ENCODE measurements at regions of chr22 and their contacts with region 1.

Region 1: DNA sequence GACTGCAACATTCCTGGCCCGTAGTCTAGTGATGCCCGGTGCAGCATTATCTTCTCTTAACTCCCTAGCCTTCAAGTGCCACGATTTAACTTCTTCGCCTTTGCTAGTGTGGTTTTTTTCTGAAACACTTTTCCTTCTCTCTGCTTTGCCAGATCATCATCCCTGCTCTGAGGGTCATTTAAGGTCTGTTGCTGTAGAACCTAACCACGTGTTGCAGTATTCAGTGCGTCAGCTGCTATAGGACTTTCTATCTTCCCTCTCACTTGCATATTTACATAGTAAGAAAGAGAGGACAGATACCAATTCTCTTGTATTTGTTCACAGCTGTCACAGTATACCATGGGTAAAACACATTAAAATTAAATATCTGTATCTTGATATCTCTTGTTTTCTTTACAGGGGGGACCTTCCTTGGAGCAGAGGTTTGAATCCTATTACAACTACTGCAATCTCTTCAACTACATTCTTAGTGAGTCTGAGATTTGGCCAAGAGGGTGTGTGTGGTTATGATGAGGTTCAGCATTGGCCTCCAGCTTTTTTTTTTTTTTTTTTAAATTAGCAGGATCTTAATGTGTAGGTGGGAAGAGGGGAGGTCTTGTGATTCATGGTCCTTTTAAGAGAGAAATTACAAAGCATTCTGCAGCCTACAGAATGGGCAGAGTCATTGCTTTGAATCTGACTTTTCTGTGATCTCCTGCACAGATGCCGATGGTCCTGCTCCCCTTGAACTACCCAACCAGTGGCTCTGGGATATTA is 13.5 kb downstream of the EIF3L start:
- DNase-seq: no peak
- H3K4me3 ChIP-seq: no peak overlapping the region
- H3K27ac ChIP-seq: no peak overlapping the region
- H3K4me1 ChIP-seq: no peaks in the 10 kb centered on the region
- H3K27me3 ChIP-seq: no peaks in the 10 kb centered on the region

Region 2: DNA sequence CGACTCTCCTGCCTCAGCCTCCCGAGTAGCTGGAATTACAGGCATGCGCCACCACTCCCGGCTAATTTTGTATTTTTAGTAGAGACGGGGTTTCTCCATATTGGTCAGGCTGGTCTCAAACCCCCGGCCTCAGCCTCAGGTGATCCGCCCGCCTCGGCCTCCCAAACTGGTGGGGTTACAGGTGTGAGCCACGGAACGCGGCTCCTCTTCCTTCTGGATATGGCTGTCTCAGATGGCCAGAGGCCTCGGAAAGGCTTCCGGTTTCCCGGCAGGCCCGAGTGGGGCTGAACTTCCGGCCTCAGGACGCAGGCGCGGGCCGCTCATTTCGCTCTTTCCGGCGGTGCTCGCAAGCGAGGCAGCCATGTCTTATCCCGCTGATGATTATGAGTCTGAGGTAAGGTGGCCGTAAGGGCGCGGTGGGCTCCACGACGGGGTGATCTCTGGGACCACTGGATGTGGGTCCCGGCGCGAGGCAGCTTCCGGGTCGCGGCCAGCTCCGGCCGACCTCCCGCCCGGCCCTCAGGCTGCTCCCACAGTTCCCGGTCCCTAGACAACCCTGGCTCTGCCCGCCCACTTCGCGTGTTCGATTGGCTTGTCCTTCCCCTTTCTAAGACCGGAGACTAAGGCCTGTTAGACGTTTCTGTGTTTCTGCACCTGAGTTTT is 13.5 kb before region 1 on chr22 and contains the start of gene EIF3L:
- CTCF ChIA-PET with region 1: interaction called, 26 read pairs
- POLR2A ChIA-PET with region 1: no interaction called
- DNase-seq: peak; percentile 82 to 83 (median 82)
- H3K4me3 ChIP-seq: peak within 1 kb of the TSS; percentile 82 to 95 (median 89)
- H3K27ac ChIP-seq: peak within 1 kb of the TSS; percentile 86 to 94
- H3K4me1 ChIP-seq: peaks cover 0 to 20% (median 16%) of the 10 kb centered on the region in 4 experiments
- H3K27me3 ChIP-seq: no peaks in the 10 kb centered on the region

Region 3: DNA sequence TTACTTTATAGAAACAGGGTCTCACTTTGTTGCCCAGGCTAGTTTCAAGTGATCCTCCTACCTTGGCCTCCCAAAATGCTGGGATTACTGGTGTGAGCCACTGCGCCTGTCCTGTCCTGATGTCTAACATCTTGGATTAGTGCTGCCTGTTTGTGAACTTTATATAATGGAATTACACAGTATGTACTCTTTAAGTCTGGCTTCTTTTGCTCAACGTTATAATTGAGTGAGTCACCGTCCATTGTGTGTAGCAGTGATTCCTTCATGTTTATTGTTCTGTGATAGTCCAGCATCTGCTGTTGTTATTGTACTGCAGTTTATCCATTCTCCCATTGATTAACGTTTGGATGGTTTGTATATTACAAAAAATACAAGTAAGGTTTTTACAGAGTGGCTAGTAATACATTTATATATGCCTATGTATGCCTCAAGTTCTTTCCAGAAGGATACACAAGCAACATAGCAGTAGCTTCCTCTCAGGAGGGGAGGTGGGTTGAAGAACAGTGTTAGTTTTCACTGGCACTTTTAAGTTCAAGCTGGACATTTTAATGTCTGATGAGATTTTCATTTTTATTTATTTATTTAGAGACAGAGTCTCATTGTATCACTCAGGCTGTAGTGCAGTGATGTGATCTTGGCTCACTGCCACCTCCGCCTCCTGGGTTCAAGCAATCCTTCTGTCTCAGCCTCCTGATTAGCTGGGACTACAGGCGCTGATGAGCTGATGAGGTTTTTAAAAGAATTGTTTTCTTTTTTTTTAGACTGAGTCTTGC is 18.1 kb after region 1 on chr22:
- CTCF ChIA-PET with region 1: interaction called, 28 read pairs
- POLR2A ChIA-PET with region 1: interaction called, 5 read pairs
- DNase-seq: no peak
- H3K4me3 ChIP-seq: no peak overlapping the region
- H3K27ac ChIP-seq: peak overlapping the region in 1 of 2 experiments; percentile 16
- H3K4me1 ChIP-seq: no peaks in the 10 kb centered on the region
- H3K27me3 ChIP-seq: no peaks in the 10 kb centered on the region

Measured in common myeloid progenitor, CD34-positive (primary cell).